CD4-positive, alpha-beta T cell (primary cell): ENCODE measurements at regions of chr4 and their contacts with region 1.

Region 1: GRCh38 chr4:145180298-145181090 is at the start of gene OTUD4:
- DNase-seq: peak; percentile 88 to 98 (median 94)
- ATAC-seq: peak; percentile 83
- H3K4me3 ChIP-seq: peak within 1 kb of the TSS; percentile 88
- H3K4me3 Mint-ChIP-seq: peak within 1 kb of the TSS; percentile 99
- H3K27ac ChIP-seq: peak within 1 kb of the TSS; percentile 92 to 95
- H3K27ac Mint-ChIP-seq: peak within 1 kb of the TSS; percentile 99
- H3K4me1 ChIP-seq: peaks cover 33% of the 10 kb centered on the region
- H3K4me1 Mint-ChIP-seq: peaks cover 38% of the 10 kb centered on the region
- H3K27me3 ChIP-seq: no peaks in the 10 kb centered on the region
- H3K27me3 Mint-ChIP-seq: no peaks in the 10 kb centered on the region
- CTCF ChIP-seq: no peak
- total RNA-seq, gene OTUD4: 75.1 to 81.1 TPM

Region 2: GRCh38 chr4:143184217-143185116 is 1996.0 kb before region 1 on chr4 and contains the start of gene USP38:
- CTCF ChIA-PET with region 1: no interaction called
- POLR2A ChIA-PET with region 1: no interaction called
- intact Hi-C with region 1: loop called in 1 of 2 experiments (anchors 5 kb)
- DNase-seq: peak; percentile 73 to 96 (median 80)
- ATAC-seq: peak; percentile 84
- H3K4me3 ChIP-seq: peak within 1 kb of the TSS; percentile 70
- H3K4me3 Mint-ChIP-seq: peak within 1 kb of the TSS; percentile 91
- H3K27ac ChIP-seq: peak within 1 kb of the TSS; percentile 93 to 97
- H3K27ac Mint-ChIP-seq: peak within 1 kb of the TSS; percentile 97
- H3K4me1 ChIP-seq: peaks cover 7% of the 10 kb centered on the region
- H3K4me1 Mint-ChIP-seq: peaks cover 75% of the 10 kb centered on the region
- H3K27me3 ChIP-seq: no peaks in the 10 kb centered on the region
- H3K27me3 Mint-ChIP-seq: no peaks in the 10 kb centered on the region
- CTCF ChIP-seq: no peak
- total RNA-seq, gene USP38: 34.2 to 35.7 TPM

Region 3: GRCh38 chr4:145299380-145300076 is 119.0 kb after region 1 on chr4:
- CTCF ChIA-PET with region 1: no interaction called
- POLR2A ChIA-PET with region 1: no interaction called
- intact Hi-C with region 1: no loop called
- DNase-seq: peak in 5 of 14 experiments; percentile 1 to 29 (median 15)
- ATAC-seq: peak; percentile 44
- H3K4me3 ChIP-seq: no peak overlapping the region
- H3K4me3 Mint-ChIP-seq: no peak overlapping the region
- H3K27ac ChIP-seq: no peak overlapping the region
- H3K27ac Mint-ChIP-seq: no peak overlapping the region
- H3K4me1 ChIP-seq: peaks cover 4% of the 10 kb centered on the region
- H3K4me1 Mint-ChIP-seq: peaks cover 17% of the 10 kb centered on the region
- H3K27me3 ChIP-seq: peaks cover 0 to 3% of the 10 kb centered on the region in 2 experiments
- H3K27me3 Mint-ChIP-seq: peaks cover 6% of the 10 kb centered on the region
- CTCF ChIP-seq: no peak

Region 4: GRCh38 chr4:145481164-145481941 is 300.9 kb after region 1 on chr4 and contains the start of gene SMAD1:
- CTCF ChIA-PET with region 1: no interaction called
- POLR2A ChIA-PET with region 1: interaction called, 4 read pairs
- intact Hi-C with region 1: loop called (anchors 5 kb)
- DNase-seq: peak in 6 of 14 experiments; percentile 17 to 51 (median 35)
- ATAC-seq: peak; percentile 57
- H3K4me3 ChIP-seq: peak within 1 kb of the TSS; percentile 53
- H3K4me3 Mint-ChIP-seq: peak within 1 kb of the TSS; percentile 98
- H3K27ac ChIP-seq: no peak within 1 kb of the TSS
- H3K27ac Mint-ChIP-seq: peak within 1 kb of the TSS; percentile 88
- H3K4me1 ChIP-seq: peaks cover 12% of the 10 kb centered on the region
- H3K4me1 Mint-ChIP-seq: peaks cover 8% of the 10 kb centered on the region
- H3K27me3 ChIP-seq: peaks cover 10 to 16% of the 10 kb centered on the region in 2 experiments
- H3K27me3 Mint-ChIP-seq: no peaks in the 10 kb centered on the region
- CTCF ChIP-seq: no peak
- total RNA-seq, gene SMAD1: 9.7 to 11.5 TPM

Region 5: DNA sequence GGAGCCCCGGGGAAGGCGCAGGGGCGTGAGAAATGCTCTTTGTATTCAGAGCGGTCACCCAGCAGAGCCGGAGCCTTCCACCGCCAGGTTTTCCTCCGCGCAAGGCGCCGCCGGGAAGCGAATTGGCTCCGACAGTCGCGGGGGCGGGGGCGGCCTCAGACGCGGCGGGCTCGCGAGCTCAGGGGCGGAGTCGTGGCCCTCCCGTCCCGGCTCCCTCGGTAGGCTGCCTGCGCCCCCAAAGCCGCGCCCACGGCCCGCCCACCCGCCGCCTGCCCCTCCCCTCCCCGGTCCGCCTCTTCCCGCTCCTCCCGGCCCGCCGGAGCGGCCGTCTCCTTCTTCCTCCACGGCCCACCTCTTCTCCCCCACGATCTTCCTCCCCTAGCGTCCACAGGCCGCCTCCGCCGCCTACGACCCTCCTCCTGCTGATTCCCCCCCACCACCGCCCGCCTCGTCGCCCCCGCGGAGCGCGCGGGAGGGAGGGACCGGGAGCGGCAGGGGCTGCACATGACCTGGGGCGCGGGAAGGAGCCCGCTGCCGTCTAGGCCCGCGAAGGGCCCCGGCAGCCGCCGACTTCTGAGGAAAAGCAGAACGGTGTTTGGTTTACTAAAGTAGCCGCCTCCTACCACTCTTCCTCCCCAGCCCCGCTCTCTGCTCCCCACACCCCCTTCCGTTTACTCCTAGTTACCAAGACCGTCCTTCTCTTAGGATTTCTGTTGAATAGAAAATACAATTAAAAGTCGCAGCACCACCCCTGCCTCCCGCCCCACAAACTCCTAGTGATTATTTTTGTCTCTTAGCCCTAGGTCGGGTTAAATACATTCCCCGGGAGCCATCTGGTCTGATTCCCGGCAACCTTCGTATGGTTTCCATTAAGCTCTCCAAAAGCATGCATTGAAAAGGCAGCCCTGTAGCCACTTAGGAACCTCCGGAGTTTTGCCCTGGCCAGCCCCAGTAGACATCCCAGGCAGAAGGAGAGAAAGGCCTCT is 552.7 kb after region 1 on chr4:
- CTCF ChIA-PET with region 1: no interaction called
- POLR2A ChIA-PET with region 1: no interaction called
- intact Hi-C with region 1: loop called in 1 of 2 experiments (anchors 5 kb)
- DNase-seq: peak; percentile 60 to 92 (median 78)
- ATAC-seq: peak; percentile 95
- H3K4me3 ChIP-seq: peak overlapping the region; percentile 76
- H3K4me3 Mint-ChIP-seq: peak overlapping the region; percentile 89
- H3K27ac ChIP-seq: peak overlapping the region in 1 of 2 donors; percentile 35
- H3K27ac Mint-ChIP-seq: peak overlapping the region; percentile 58
- H3K4me1 ChIP-seq: peaks cover 14% of the 10 kb centered on the region
- H3K4me1 Mint-ChIP-seq: peaks cover 21% of the 10 kb centered on the region
- H3K27me3 ChIP-seq: no peaks in the 10 kb centered on the region
- H3K27me3 Mint-ChIP-seq: no peaks in the 10 kb centered on the region
- CTCF ChIP-seq: no peak

Region 6: GRCh38 chr4:146175541-146176453 is 995.3 kb after region 1 on chr4 and contains the start of gene LSM6:
- CTCF ChIA-PET with region 1: no interaction called
- POLR2A ChIA-PET with region 1: no interaction called
- intact Hi-C with region 1: loop called in 1 of 2 experiments (anchors 5 kb)
- DNase-seq: peak; percentile 66 to 92 (median 76)
- ATAC-seq: peak; percentile 90
- H3K4me3 ChIP-seq: peak within 1 kb of the TSS; percentile 94
- H3K4me3 Mint-ChIP-seq: peak within 1 kb of the TSS; percentile 92
- H3K27ac ChIP-seq: peak within 1 kb of the TSS; percentile 54 to 71
- H3K27ac Mint-ChIP-seq: peak within 1 kb of the TSS; percentile 99
- H3K4me1 ChIP-seq: peaks cover 21% of the 10 kb centered on the region
- H3K4me1 Mint-ChIP-seq: peaks cover 62% of the 10 kb centered on the region
- H3K27me3 ChIP-seq: no peaks in the 10 kb centered on the region
- H3K27me3 Mint-ChIP-seq: no peaks in the 10 kb centered on the region
- CTCF ChIP-seq: no peak
- total RNA-seq, gene LSM6: 33.8 to 34.2 TPM